Spleen (tissue), 13 donors: ENCODE measurements at regions of chr7 and their contacts with region 1.

Region 1: GRCh38 chr7:129091484-129092002 is 36.6 kb upstream of the TNPO3 start:
- DNase-seq: peak; percentile 95
- H3K4me3 ChIP-seq: no peak overlapping the region
- H3K27ac ChIP-seq: peak overlapping the region in 3 of 8 donors; percentile 2 to 63 (median 18)
- H3K4me1 ChIP-seq: peaks cover 0 to 48% (median 23%) of the 10 kb centered on the region in 6 donors
- H3K27me3 ChIP-seq: no peaks in the 10 kb centered on the region
- CTCF ChIP-seq: peak; percentile 94 to 98 (median 97)
- POLR2A ChIP-seq: no peak

Region 2: DNA sequence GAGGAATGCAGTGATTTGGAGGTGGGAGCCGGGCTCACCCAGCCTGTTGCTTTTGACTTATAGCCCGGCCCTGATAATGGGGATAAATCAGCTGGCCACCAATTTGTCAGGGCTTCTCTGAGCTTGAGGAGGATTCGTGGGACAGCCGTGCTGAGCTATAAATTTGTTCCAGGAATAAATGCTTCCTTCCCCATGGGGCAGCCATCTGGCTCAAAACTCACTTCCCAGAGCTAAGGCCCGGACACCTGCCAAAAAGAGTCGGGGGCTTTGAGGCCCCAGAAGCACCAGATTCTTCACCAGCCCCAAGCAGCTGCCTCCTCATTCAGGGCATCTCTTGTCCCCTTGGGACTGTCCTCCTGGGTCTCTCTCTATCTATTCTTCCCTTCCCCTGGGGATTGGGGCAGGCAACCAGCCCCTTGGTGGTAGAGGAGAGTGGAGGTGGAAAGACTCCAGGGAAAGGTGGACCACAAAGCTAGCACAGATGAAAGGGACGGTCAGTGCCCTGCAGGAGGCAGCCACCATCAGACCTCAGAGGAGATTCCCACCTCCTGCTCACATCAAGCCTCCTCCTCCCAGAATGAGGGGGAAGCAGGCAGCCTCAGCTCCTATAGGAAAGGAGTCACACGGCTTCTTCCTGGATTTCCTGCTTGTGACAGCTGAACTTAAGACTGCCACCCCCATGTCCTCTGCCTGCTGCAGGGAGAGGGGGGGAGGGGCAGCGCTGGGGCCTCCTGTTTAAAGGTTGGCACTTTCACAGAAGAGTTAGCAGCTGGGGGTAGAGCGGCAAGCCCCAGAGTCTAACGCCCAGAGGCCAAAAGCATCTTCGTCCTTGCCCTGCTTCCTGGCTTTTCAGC is 1016.1 kb before region 1 on chr7:
- intact Hi-C with region 1: no loop called
- DNase-seq: peak; percentile 24
- H3K4me3 ChIP-seq: no peak overlapping the region
- H3K27ac ChIP-seq: no peak overlapping the region
- H3K4me1 ChIP-seq: peaks cover 0 to 30% (median 13%) of the 10 kb centered on the region in 6 donors
- H3K27me3 ChIP-seq: no peaks in the 10 kb centered on the region
- CTCF ChIP-seq: no peak
- POLR2A ChIP-seq: no peak

Region 3: GRCh38 chr7:128904381-128905197 is 187.0 kb before region 1 on chr7:
- intact Hi-C with region 1: loop called (anchors 5 kb)
- DNase-seq: peak; percentile 69
- H3K4me3 ChIP-seq: no peak overlapping the region
- H3K27ac ChIP-seq: no peak overlapping the region
- H3K4me1 ChIP-seq: peaks cover 0 to 13% (median 1%) of the 10 kb centered on the region in 6 donors
- H3K27me3 ChIP-seq: peaks cover 0 to 46% (median 6%) of the 10 kb centered on the region in 7 donors
- CTCF ChIP-seq: peak; percentile 53 to 79 (median 65)
- POLR2A ChIP-seq: no peak